Endothelial cell of umbilical vein (primary cell): ENCODE measurements at regions of chr13 and their contacts with region 1.

Region 1: DNA sequence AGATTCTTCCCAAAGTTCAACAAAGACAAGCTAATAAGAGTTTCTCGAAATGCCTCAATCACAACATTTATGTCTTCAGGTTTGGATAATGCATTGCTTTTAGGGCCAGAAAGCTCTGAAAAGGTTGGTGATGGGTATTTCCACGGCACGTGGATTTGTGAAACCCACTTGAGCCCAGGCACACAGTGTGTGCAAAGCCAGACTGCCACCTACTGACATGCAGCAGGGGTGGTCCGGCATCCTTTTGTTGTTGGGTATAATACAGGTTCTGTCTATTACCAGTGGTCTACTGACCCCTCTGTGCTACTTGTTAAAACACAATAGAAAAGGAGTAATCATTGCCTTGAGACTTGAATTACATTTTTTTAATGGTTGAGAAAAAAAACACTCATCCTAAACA is 225.6 kb downstream of the RAP2A start:
- DNase-seq: peak; percentile 45
- H3K4me3 ChIP-seq: no peak overlapping the region
- H3K27ac ChIP-seq: no peak overlapping the region
- H3K4me1 ChIP-seq: peaks cover 54% of the 10 kb centered on the region
- H3K27me3 ChIP-seq: no peaks in the 10 kb centered on the region
- CTCF ChIP-seq: peak; percentile 30 to 41
- POLR2A ChIP-seq: no peak

Region 2: DNA sequence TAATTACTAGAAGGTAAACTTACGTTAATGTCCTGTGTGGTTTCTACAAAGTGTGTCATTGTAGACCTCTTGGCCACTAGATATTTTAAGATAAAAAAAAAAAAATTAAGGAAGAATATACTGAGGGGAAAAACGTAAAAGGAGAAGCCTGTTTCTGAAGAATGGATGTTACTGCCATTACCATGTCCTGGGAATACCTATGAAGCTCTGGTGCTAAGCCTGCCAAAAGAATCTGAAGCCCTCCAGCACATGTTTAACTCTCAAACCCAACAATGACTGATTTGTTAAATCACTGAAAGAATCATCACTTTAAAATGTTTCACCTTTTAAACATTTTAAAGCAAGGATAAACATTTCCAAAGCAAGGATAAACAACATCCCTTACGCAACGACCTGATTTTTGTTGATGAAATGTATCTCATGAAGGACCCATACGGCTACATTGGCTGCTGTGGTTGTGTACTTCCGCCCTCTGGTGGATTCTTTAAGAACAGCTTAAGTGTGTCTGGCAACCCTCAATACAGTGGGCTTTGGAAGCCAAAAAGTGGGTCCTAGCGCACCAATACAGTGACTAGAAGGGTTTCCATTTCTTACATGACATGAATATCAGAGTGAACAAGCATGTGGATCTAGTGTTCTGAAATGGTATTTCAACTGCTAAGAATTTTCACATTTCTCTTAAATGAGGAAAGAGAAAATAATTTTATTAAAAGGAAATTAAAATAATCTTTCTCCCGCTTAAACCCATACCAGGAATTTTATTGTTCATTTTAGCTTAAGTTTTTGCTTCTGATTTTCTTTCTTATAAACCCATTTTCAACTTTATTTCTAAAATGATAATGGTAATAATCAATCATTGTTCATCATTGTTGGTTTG is 300.2 kb before region 1 on chr13:
- CTCF ChIA-PET with region 1: interaction called, 4 read pairs
- POLR2A ChIA-PET with region 1: no interaction called
- dilution Hi-C with region 1: no loop called
- intact Hi-C with region 1: loop called (anchors 2 kb)
- DNase-seq: peak; percentile 81
- H3K4me3 ChIP-seq: no peak overlapping the region
- H3K27ac ChIP-seq: peak overlapping the region; percentile 20
- H3K4me1 ChIP-seq: no peaks in the 10 kb centered on the region
- H3K27me3 ChIP-seq: no peaks in the 10 kb centered on the region
- CTCF ChIP-seq: peak; percentile 66 to 80
- POLR2A ChIP-seq: no peak

Region 3: GRCh38 chr13:97423300-97424045 is 236.1 kb before region 1 on chr13:
- CTCF ChIA-PET with region 1: no interaction called
- POLR2A ChIA-PET with region 1: no interaction called
- dilution Hi-C with region 1: no loop called
- intact Hi-C with region 1: no loop called
- DNase-seq: no peak
- H3K4me3 ChIP-seq: no peak overlapping the region
- H3K27ac ChIP-seq: no peak overlapping the region
- H3K4me1 ChIP-seq: no peaks in the 10 kb centered on the region
- H3K27me3 ChIP-seq: peaks cover 3% of the 10 kb centered on the region in 2 experiments
- CTCF ChIP-seq: no peak
- POLR2A ChIP-seq: no peak

Region 4: GRCh38 chr13:97648171-97648880 is 11.3 kb before region 1 on chr13:
- CTCF ChIA-PET with region 1: interaction called, 7 read pairs
- POLR2A ChIA-PET with region 1: no interaction called
- dilution Hi-C with region 1: no loop called
- intact Hi-C with region 1: loop called (anchors 1 kb)
- DNase-seq: peak; percentile 88
- H3K4me3 ChIP-seq: peak overlapping the region in 1 of 3 experiments; percentile 45
- H3K27ac ChIP-seq: peak overlapping the region; percentile 85
- H3K4me1 ChIP-seq: peaks cover 14% of the 10 kb centered on the region
- H3K27me3 ChIP-seq: no peaks in the 10 kb centered on the region
- CTCF ChIP-seq: no peak
- POLR2A ChIP-seq: no peak

Region 5: DNA sequence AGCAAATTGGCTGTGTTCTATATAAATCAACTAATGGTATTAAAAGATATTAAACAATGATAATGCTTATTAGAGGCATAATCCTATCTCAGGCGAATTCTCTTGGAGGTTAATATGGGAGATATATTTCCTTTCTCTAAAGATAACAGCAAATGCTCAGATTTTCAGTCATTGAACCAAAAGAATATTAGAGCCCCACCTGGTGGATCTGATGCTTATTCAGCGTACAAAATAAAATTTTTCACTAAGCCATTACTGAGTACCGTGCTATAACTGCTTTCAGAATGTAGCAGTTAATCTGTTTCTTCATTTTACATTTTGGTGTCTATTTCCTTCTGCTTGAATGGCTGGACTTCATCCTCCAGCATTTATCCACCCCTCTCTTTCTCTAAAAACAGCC is 150.6 kb after region 1 on chr13:
- CTCF ChIA-PET with region 1: no interaction called
- POLR2A ChIA-PET with region 1: no interaction called
- dilution Hi-C with region 1: no loop called
- intact Hi-C with region 1: loop called (anchors 2 kb)
- DNase-seq: peak; percentile 34
- H3K4me3 ChIP-seq: no peak overlapping the region
- H3K27ac ChIP-seq: no peak overlapping the region
- H3K4me1 ChIP-seq: no peaks in the 10 kb centered on the region
- H3K27me3 ChIP-seq: peaks cover 7% of the 10 kb centered on the region in 2 experiments
- CTCF ChIP-seq: peak; percentile 14 to 20
- POLR2A ChIP-seq: no peak

Region 6: GRCh38 chr13:97911311-97912128 is 251.9 kb after region 1 on chr13:
- CTCF ChIA-PET with region 1: no interaction called
- POLR2A ChIA-PET with region 1: no interaction called
- dilution Hi-C with region 1: no loop called
- intact Hi-C with region 1: no loop called
- DNase-seq: peak; percentile 14
- H3K4me3 ChIP-seq: no peak overlapping the region
- H3K27ac ChIP-seq: no peak overlapping the region
- H3K4me1 ChIP-seq: no peaks in the 10 kb centered on the region
- H3K27me3 ChIP-seq: no peaks in the 10 kb centered on the region
- CTCF ChIP-seq: peak; percentile 43 to 46
- POLR2A ChIP-seq: no peak